ENCODE measurements at regions of chr17 and their contacts with region 1.

Region 1: DNA sequence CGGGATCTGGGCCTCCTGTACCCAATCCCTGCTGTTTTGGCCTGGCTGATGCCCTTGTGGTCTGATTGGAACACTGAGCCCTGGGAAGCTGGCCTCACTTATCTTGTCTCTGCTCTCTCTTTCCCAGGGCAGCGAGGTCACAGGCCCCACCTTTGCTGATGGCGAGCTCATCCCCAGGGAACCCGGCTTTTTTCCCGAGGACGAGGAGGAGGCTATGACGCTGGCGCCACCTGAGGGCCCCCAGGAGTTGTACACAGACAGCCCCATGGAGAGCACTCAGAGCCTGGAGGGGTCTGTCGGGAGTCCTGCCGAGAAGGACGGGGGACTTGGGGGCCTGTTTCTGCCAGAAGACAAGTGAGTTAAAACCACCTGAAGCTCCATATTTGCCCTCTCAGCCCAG is 126.0 kb downstream of the RAB11FIP4 start:
- DNase-seq: no peak
- ATAC-seq: peak; percentile 90
- H3K4me3 ChIP-seq: no peak overlapping the region
- H3K27ac ChIP-seq: no peak overlapping the region
- H3K4me1 ChIP-seq: peaks cover 0 to 4% of the 10 kb centered on the region in 2 experiments; a peak in 1 of 4 replicates
- H3K27me3 ChIP-seq: no peaks in the 10 kb centered on the region
- CTCF ChIP-seq: peak; percentile 68 to 81 (median 69)
- POLR2A ChIP-seq: no peak
- RAD21 ChIP-seq: peak; percentile 89

Region 2: GRCh38 chr17:31388770-31389661 is 128.5 kb before region 1 on chr17:
- CTCF ChIA-PET with region 1: interaction called, 16 read pairs
- POLR2A ChIA-PET with region 1: interaction called, 3 read pairs
- RAD21 ChIA-PET with region 1: interaction called in 1 of 2 experiments, 7 read pairs
- intact Hi-C with region 1: no loop called
- DNase-seq: no peak
- ATAC-seq: peak; percentile 89
- H3K4me3 ChIP-seq: no peak overlapping the region
- H3K27ac ChIP-seq: no peak overlapping the region
- H3K4me1 ChIP-seq: no peaks in the 10 kb centered on the region
- H3K27me3 ChIP-seq: no peaks in the 10 kb centered on the region
- CTCF ChIP-seq: peak; percentile 69 to 89 (median 78); a peak in 5 of 6 replicates
- POLR2A ChIP-seq: no peak
- RAD21 ChIP-seq: peak; percentile 72

Region 3: DNA sequence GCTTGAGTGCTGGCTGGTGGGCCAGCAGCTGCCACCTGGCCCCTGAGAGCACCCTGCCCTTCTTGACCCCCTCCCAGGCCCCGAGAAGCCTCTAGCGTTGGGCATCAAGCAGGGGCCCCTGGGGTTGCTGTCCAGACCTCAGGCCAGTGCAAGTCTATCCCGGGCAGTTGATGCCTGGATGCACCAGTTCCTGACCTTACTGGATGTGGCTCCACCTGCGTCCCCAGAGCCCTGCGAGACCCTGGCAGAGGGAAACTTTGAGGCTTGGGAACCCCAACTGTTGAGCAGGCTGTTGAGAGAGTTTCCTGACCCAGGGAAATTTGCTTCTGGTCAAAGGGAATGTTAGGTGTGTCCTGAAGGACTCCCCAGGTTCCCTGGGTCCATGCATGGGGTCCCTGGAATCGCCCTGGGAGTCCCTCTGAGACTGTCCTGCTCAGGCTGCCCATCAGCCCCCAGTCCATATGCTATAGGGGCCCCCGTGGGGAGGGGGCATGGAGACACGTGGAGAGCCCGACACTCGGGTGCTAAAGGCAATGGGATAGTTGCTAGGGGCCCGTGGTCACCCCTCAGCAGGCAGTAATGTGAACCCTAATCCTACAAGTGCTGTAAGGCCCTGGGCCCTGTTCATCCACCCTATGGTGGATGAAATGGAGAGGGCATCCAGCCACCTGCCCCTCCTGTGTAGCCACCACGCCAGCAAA is 79.7 kb before region 1 on chr17:
- CTCF ChIA-PET with region 1: interaction called, 23 read pairs
- POLR2A ChIA-PET with region 1: interaction called, 3 read pairs
- RAD21 ChIA-PET with region 1: interaction called, 9 to 10 read pairs
- intact Hi-C with region 1: loop called (anchors 1 kb)
- DNase-seq: no peak
- ATAC-seq: no peak; the same call in 1 of the 2 replicates
- H3K4me3 ChIP-seq: no peak overlapping the region
- H3K27ac ChIP-seq: no peak overlapping the region
- H3K4me1 ChIP-seq: peaks cover 0 to 5% of the 10 kb centered on the region in 2 experiments; a peak in 1 of 4 replicates
- H3K27me3 ChIP-seq: no peaks in the 10 kb centered on the region
- CTCF ChIP-seq: no peak
- POLR2A ChIP-seq: no peak
- RAD21 ChIP-seq: no peak

Region 4: GRCh38 chr17:31499771-31500554 is 17.6 kb before region 1 on chr17:
- CTCF ChIA-PET with region 1: no interaction called
- POLR2A ChIA-PET with region 1: no interaction called
- RAD21 ChIA-PET with region 1: no interaction called
- intact Hi-C with region 1: no loop called
- DNase-seq: peak; percentile 42
- ATAC-seq: peak; percentile 92
- H3K4me3 ChIP-seq: peak overlapping the region in 1 of 2 experiments; percentile 46; a peak in 2 of 4 replicates
- H3K27ac ChIP-seq: peak overlapping the region; percentile 13; the same call in 1 of the 2 replicates
- H3K4me1 ChIP-seq: peaks cover 26 to 42% of the 10 kb centered on the region in 2 experiments
- H3K27me3 ChIP-seq: no peaks in the 10 kb centered on the region
- CTCF ChIP-seq: no peak
- POLR2A ChIP-seq: no peak
- RAD21 ChIP-seq: 0 out of 2 replicates have a peak, but pooled peaks have one; percentile 1

Measured in HCT116 (cell line).